Breast epithelium (tissue), 4 donors: ENCODE measurements at regions of chr9 and their contacts with region 1.

Region 1: GRCh38 chr9:136336156-136336870 is 9.0 kb downstream of the GPSM1 start:
- DNase-seq: no peak
- H3K4me3 ChIP-seq: no peak overlapping the region
- H3K27ac ChIP-seq: peak overlapping the region in 1 of 2 donors; percentile 30
- H3K4me1 ChIP-seq: no peaks in the 10 kb centered on the region
- H3K27me3 ChIP-seq: no peaks in the 10 kb centered on the region
- CTCF ChIP-seq: no peak
- POLR2A ChIP-seq: no peak

Region 2: GRCh38 chr9:136289651-136290507 is 46.4 kb before region 1 on chr9:
- intact Hi-C with region 1: loop called (anchors 2 kb)
- DNase-seq: no peak
- H3K4me3 ChIP-seq: no peak overlapping the region
- H3K27ac ChIP-seq: no peak overlapping the region
- H3K4me1 ChIP-seq: no peaks in the 10 kb centered on the region
- H3K27me3 ChIP-seq: peaks cover 4 to 62% of the 10 kb centered on the region in 2 donors
- CTCF ChIP-seq: no peak
- POLR2A ChIP-seq: no peak

Region 3: GRCh38 chr9:136640171-136641111 is 304.1 kb after region 1 on chr9:
- intact Hi-C with region 1: no loop called
- DNase-seq: no peak
- H3K4me3 ChIP-seq: peak overlapping the region in 1 of 3 donors; percentile 30
- H3K27ac ChIP-seq: peak overlapping the region in 1 of 2 donors; percentile 76
- H3K4me1 ChIP-seq: no peaks in the 10 kb centered on the region
- H3K27me3 ChIP-seq: peaks cover 0 to 18% of the 10 kb centered on the region in 2 donors
- CTCF ChIP-seq: no peak
- POLR2A ChIP-seq: no peak

Region 4: GRCh38 chr9:136840140-136840687 is 503.9 kb after region 1 on chr9:
- intact Hi-C with region 1: no loop called
- DNase-seq: no peak
- H3K4me3 ChIP-seq: no peak overlapping the region
- H3K27ac ChIP-seq: peak overlapping the region in 1 of 2 donors; percentile 13
- H3K4me1 ChIP-seq: peaks cover 0 to 7% of the 10 kb centered on the region in 2 donors
- H3K27me3 ChIP-seq: peaks cover 6 to 16% of the 10 kb centered on the region in 2 donors
- CTCF ChIP-seq: no peak
- POLR2A ChIP-seq: no peak